Activated naive CD4-positive, alpha-beta T cell treated with anti-CD3 and anti-CD28 coated beads for 36 hours (primary cell): ENCODE measurements at regions of chr2 and their contacts with region 1.

Region 1: DNA sequence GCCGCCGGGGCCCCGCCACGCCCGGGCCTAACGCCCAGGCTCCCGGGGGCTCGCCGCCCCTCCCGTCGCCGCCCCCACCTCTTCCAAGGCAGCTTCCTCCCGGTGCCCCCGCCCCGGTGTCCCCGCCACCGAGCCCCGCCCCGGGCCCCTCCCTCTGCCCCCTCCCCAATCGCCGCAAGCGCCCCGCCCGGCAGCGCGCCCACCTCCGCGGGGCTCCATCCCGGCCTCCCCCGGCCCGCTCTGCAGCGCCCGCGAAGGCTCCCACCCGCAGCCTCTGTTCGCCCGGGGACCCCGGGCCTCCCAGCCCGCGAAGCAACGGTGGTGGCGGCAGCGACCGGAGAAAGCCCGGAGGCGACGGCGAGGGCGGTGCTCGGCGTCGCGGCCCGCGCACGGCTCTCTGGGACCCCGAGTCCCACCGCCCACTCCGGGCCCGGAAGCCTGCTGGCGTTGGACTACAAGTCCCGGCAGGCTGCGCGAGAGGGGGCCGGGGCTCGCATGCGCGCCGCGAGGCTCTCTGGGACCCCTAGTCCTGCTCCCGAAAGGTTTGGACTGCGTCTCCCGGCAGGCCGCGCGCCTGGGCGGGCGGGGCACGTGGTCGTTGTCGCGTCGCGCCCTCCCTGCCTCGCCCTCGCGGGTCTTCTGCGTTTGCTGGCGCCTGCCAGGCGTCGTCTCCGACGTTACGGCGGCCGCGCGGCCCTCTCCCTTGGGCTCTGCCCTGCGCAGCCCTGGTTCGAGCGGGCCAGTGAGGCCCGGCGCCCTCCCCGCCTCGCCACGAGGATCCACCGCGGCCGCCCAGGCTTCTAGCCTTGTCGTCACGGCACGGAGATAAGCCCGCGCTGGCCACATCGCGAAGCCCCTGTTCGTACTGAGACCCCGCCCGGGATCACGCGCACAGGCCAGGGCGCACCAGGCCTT is at the start of gene STK25:
- DNase-seq: peak; percentile 98
- H3K4me3 Mint-ChIP-seq: peak within 1 kb of the TSS; percentile 79
- H3K27ac Mint-ChIP-seq: no peak within 1 kb of the TSS
- H3K4me1 Mint-ChIP-seq: peaks cover 21% of the 10 kb centered on the region
- H3K27me3 Mint-ChIP-seq: no peaks in the 10 kb centered on the region
- total RNA-seq, gene STK25: 81.2 to 88.4 TPM

Region 2: DNA sequence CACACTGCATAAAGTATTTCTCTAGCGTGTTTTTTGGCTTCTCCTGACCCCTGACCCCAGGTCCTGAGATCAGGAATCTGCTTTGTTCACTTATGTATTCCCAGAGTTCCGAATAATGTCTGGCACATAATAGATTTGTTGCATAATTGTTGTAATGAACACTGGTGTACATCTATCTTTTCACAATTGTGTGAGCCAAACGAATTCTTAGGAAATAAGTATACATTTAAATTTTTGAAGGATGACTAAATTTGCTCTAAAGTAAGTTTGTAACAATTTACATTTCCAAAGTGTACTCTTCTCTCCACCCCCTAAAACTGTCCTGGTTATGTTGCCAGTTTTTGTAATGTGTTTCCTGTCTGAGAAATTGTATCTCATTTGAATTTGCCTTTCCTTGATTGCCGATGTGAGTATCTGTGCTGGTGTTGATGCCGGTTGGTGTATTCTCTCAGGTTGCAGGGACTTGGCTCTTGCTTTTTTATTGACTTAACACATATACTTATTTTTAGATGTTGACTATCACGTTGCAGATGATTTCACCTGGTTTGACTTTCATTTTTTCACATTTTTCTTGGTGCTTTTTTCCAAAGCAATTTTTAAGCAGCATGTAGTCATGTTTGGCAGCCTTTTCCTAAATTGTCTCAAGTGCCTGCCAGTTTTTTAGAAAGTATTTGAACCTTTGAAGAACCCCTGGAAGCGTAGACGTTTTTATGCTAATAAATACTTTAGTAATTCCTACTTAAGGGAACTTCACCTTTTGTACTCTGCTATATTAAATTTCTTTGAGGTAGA is 168.5 kb before region 1 on chr2:
- CTCF ChIA-PET with region 1: no interaction called
- intact Hi-C with region 1: no loop called
- DNase-seq: no peak
- H3K4me3 Mint-ChIP-seq: no peak overlapping the region
- H3K27ac Mint-ChIP-seq: peak overlapping the region; percentile 80
- H3K4me1 Mint-ChIP-seq: peaks cover 44% of the 10 kb centered on the region
- H3K27me3 Mint-ChIP-seq: no peaks in the 10 kb centered on the region

Region 3: DNA sequence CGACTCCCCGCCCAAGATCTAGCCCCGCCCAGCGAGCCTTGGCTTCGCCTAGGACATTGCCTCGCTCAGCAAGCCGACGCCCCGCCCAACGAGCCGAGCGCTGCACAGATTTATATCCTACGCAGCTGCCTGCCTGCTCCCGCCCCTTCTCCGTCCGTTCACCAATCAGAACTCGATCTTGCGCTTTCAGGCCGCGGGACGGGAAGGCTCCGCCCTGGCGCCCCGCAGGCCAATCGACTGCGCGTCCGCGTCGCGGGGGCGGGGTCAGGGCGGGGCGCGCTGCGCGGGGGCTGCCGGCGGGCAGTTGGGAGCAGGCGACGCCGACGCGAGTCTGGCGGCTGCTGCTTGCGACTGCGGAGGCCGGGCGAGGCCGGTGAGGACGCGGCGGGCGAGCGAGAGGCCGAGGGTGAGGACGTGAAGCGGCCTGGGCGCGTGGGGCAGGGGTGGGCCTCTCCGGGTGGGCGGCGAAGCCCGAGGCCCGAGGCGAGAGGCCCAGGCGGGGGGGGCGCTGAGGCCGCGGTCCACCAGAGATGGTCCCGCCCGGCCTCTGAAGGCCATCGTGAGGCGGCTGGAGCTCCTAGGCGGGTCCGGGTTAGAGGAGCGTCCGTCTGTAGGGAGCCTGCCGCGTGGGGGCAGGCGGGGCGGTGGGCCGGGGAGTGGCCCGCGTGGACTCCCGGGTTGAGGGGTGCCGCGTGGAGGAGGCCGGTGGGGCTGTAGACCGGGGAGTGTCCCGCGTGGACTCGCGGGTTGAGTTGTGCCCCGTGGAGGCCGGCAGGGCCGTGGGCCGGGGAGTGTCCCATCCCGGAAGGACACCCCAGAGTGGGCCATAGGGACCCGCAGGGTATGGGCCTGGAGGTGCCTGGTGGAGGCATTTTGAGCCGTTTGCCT is 152.3 kb before region 1 on chr2 and contains the start of gene FARP2:
- CTCF ChIA-PET with region 1: no interaction called
- intact Hi-C with region 1: loop called (anchors 1 kb)
- DNase-seq: peak; percentile 99
- H3K4me3 Mint-ChIP-seq: peak within 1 kb of the TSS; percentile 78
- H3K27ac Mint-ChIP-seq: peak within 1 kb of the TSS; percentile 76
- H3K4me1 Mint-ChIP-seq: peaks cover 27% of the 10 kb centered on the region
- H3K27me3 Mint-ChIP-seq: no peaks in the 10 kb centered on the region
- total RNA-seq, gene FARP2: 19.5 to 19.6 TPM

Region 4: DNA sequence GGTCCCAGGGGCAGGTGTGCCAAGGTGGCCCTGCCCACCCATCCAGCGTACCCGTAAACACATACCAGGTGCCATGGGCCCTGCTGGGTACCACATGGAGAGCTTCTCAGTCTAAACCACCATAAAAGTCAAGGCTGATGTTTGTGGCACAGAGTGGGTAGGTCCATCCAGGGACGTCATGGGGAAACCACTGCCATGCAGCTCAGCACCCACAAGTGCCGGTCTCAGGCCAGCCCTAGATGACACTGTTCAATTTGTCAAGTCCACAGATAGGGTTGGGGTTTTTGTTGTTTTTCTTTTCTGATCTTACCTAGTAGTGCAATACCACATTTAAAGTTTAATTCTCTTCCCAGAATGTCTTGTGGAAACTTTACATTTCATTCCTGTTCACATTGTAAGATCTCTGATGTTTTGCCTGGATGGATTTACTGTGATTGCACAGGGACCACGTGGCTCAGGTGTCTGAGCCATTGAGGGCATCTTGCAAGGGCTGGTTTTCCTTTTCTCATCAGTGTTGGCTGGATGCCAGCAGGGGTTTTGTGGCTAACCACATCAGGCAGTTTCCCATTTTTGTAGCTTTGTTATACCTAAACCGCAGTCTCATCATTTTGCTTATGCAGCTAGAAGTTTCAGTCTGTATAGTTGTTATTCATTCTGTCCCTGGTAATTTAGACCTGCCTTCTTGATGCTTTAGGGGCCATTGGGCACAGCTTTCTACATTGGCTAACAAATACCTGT is 64.8 kb before region 1 on chr2:
- CTCF ChIA-PET with region 1: no interaction called
- intact Hi-C with region 1: loop called (anchors 2 kb)
- DNase-seq: peak; percentile 98
- H3K4me3 Mint-ChIP-seq: no peak overlapping the region
- H3K27ac Mint-ChIP-seq: peak overlapping the region; percentile 22
- H3K4me1 Mint-ChIP-seq: peaks cover 24% of the 10 kb centered on the region
- H3K27me3 Mint-ChIP-seq: peaks cover 54% of the 10 kb centered on the region

Region 5: GRCh38 chr2:241609859-241610793 is 101.6 kb after region 1 on chr2:
- CTCF ChIA-PET with region 1: no interaction called
- intact Hi-C with region 1: loop called (anchors 1 kb)
- DNase-seq: peak; percentile 90
- H3K4me3 Mint-ChIP-seq: peak overlapping the region; percentile 50
- H3K27ac Mint-ChIP-seq: no peak overlapping the region
- H3K4me1 Mint-ChIP-seq: peaks cover 15% of the 10 kb centered on the region
- H3K27me3 Mint-ChIP-seq: no peaks in the 10 kb centered on the region

Region 6: DNA sequence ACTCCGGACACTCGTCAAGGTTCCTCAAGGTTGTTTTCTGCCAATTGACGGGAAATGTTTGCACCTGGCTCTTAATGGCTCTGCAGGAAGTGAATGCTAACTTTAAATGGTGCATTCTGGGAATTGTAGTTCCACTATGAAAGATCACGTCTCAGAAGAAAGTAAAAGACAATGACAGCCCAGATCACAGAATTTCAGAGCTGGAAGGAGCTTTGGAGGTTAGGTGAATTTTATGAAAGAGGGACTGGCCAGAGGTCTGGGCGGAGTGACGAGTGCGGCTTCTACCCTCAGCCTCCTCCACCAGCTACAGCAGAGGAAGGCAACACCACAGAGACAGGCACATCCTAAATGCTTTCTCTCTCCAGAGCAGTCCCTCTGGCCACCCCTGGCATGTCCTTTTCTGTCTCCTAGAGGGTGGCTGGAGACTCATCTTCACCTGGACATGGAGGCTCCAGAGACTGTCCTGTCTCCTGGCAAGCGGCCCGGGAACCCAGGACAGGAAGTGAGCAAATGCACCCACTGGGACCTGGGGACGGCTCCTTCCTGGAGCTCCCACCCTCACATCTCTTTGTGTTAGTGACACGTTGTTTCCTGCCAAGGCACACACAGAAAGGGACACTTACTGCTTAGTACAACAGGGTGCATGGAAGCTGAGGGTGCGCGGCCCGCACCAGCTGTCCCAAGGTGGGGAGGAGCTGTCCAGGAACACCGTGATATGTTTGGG is 109.1 kb after region 1 on chr2:
- CTCF ChIA-PET with region 1: no interaction called
- intact Hi-C with region 1: loop called (anchors 1 kb)
- DNase-seq: peak; percentile 61
- H3K4me3 Mint-ChIP-seq: peak overlapping the region; percentile 75
- H3K27ac Mint-ChIP-seq: peak overlapping the region; percentile 90
- H3K4me1 Mint-ChIP-seq: peaks cover 47% of the 10 kb centered on the region
- H3K27me3 Mint-ChIP-seq: no peaks in the 10 kb centered on the region

Region 7: DNA sequence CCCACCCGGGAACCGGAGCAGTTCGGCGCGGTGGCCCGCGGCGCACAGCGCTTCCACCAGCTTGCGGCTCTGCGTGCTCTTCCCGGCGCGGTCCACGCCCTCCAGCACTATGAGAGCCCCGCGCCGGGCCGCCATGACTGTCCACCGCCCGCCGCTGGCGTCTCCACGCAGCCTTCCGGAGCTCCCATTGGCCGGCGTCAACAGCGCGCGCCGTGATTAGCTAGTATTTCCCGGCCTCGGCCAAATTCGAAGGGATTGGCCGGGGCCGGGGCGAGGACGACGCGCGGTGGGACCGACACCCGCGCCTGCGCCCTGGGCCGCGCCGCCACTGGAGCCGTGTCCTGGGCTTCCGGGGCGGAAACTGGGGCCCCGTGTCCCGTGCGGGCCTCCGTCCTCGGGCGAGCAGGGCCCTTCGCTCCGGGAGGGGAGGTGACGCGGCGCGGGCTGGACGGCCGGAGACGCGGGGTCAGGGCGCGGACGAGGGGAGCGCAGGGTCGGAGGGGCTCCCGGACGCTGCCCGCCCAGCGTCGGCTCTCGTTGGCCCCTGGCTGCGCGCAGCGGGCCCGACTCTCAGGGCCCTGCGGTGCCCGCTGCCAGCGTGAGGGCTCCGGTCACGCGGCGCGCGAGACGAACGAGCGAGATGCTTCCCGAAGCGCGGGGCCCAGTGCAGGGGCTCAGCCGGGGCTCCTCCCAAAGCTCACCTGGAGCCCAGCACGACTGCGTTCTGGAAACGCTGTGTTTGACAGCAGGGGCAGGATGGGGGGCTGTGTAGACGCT is 178.3 kb after region 1 on chr2 and contains the start of gene DTYMK:
- CTCF ChIA-PET with region 1: no interaction called
- intact Hi-C with region 1: loop called (anchors 1 kb)
- DNase-seq: peak; percentile 97
- H3K4me3 Mint-ChIP-seq: peak within 1 kb of the TSS; percentile 99
- H3K27ac Mint-ChIP-seq: peak within 1 kb of the TSS; percentile 94
- H3K4me1 Mint-ChIP-seq: peaks cover 39% of the 10 kb centered on the region
- H3K27me3 Mint-ChIP-seq: no peaks in the 10 kb centered on the region
- total RNA-seq, gene DTYMK: 88.0 to 93.8 TPM

Region 8: DNA sequence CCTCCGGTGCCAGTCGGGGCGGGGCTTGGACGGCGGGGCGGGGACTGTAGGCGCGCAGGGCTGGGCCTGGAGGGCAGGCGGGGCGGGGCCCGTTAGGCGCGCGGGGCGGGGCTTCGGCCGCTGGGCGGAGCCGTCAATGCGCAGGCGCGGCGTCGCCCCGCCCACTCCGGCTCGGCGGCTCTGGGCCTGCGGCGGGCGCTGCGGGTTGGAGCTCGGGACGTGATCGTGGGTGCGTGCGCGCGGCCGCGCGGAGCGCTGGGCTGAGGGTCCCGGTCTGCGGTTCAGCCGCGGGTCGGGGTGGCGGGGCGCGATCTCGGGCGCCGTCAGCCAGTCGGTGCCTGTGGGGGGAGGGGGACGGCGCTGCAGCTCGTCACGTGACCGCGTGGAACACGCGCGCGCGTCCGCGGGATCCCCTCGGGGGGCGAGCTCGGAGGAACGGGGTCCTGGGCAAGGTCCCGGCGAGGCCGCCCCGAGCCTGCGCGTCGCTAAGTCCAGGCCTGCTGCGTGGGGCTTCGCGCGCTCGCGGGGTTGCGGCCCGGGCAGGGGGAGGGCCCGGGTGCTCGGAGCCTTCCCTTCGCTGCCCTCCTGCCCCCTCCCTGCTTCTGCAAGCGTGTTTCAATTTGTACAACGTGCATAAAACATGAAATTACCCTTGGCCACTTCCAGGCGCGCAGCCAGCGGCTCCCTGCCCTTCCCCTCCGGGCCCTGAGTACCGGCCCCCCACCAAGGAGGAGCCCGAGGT is 226.1 kb after region 1 on chr2 and contains the start of gene D2HGDH:
- CTCF ChIA-PET with region 1: no interaction called
- intact Hi-C with region 1: loop called (anchors 5 kb)
- DNase-seq: peak; percentile 95
- H3K4me3 Mint-ChIP-seq: peak within 1 kb of the TSS; percentile 78
- H3K27ac Mint-ChIP-seq: no peak within 1 kb of the TSS
- H3K4me1 Mint-ChIP-seq: peaks cover 52% of the 10 kb centered on the region
- H3K27me3 Mint-ChIP-seq: no peaks in the 10 kb centered on the region
- total RNA-seq, gene D2HGDH: 19.4 to 23.1 TPM